ENCODE measurements at regions of chr18 and their contacts with region 1.

Region 1: GRCh38 chr18:48951448-48952286 is 902 bp upstream of the SMAD7 start:
- DNase-seq: peak; percentile 59 to 79 (median 67)
- ATAC-seq: peak; percentile 69
- H3K4me3 ChIP-seq: peak overlapping the region; percentile 69
- H3K4me3 Mint-ChIP-seq: peak overlapping the region; percentile 84 to 97 (median 94)
- H3K27ac ChIP-seq: peak overlapping the region; percentile 76
- H3K27ac Mint-ChIP-seq: peak overlapping the region; percentile 87 to 99 (median 96)
- H3K4me1 ChIP-seq: peaks cover 26 to 38% of the 10 kb centered on the region in 2 donors
- H3K4me1 Mint-ChIP-seq: peaks cover 24 to 55% (median 44%) of the 10 kb centered on the region in 7 donors
- H3K27me3 ChIP-seq: no peaks in the 10 kb centered on the region
- H3K27me3 Mint-ChIP-seq: peaks cover 0 to 11% (median 0%) of the 10 kb centered on the region in 5 donors

Region 2: GRCh38 chr18:48913201-48913600 is 38.5 kb before region 1 on chr18:
- CTCF ChIA-PET with region 1: interaction called, 3 read pairs
- POLR2A ChIA-PET with region 1: interaction called, 10 read pairs
- intact Hi-C with region 1: loop called in 1 of 2 experiments (anchors 2 kb)
- DNase-seq: peak in 4 of 9 donors; percentile 32 to 51 (median 44)
- ATAC-seq: peak; percentile 78
- H3K4me3 ChIP-seq: no peak overlapping the region
- H3K4me3 Mint-ChIP-seq: no peak overlapping the region
- H3K27ac ChIP-seq: no peak overlapping the region
- H3K27ac Mint-ChIP-seq: peak overlapping the region in 2 of 9 donors; percentile 28 to 55
- H3K4me1 ChIP-seq: peaks cover 11 to 19% of the 10 kb centered on the region in 2 donors
- H3K4me1 Mint-ChIP-seq: peaks cover 22 to 43% (median 33%) of the 10 kb centered on the region in 7 donors
- H3K27me3 ChIP-seq: no peaks in the 10 kb centered on the region
- H3K27me3 Mint-ChIP-seq: peaks cover 0 to 1% (median 0%) of the 10 kb centered on the region in 5 donors

Region 3: GRCh38 chr18:48940854-48941611 is 10.6 kb before region 1 on chr18:
- CTCF ChIA-PET with region 1: interaction called, 4 read pairs
- POLR2A ChIA-PET with region 1: interaction called, 41 read pairs
- intact Hi-C with region 1: loop called (anchors 1 kb)
- DNase-seq: peak; percentile 53 to 98 (median 96)
- ATAC-seq: peak; percentile 91
- H3K4me3 ChIP-seq: peak overlapping the region; percentile 36
- H3K4me3 Mint-ChIP-seq: peak overlapping the region; percentile 78 to 94 (median 86)
- H3K27ac ChIP-seq: peak overlapping the region; percentile 49
- H3K27ac Mint-ChIP-seq: peak overlapping the region; percentile 80 to 98 (median 93)
- H3K4me1 ChIP-seq: peaks cover 64 to 85% of the 10 kb centered on the region in 2 donors
- H3K4me1 Mint-ChIP-seq: peaks cover 59 to 100% (median 95%) of the 10 kb centered on the region in 7 donors
- H3K27me3 ChIP-seq: no peaks in the 10 kb centered on the region
- H3K27me3 Mint-ChIP-seq: no peaks in the 10 kb centered on the region

Region 4: GRCh38 chr18:48997985-48998831 is 46.5 kb after region 1 on chr18:
- CTCF ChIA-PET with region 1: no interaction called
- POLR2A ChIA-PET with region 1: interaction called, 3 read pairs
- intact Hi-C with region 1: loop called (anchors 1 to 2 kb)
- DNase-seq: no peak
- ATAC-seq: peak; percentile 25
- H3K4me3 ChIP-seq: no peak overlapping the region
- H3K4me3 Mint-ChIP-seq: peak overlapping the region in 2 of 10 donors; percentile 3 to 59
- H3K27ac ChIP-seq: no peak overlapping the region
- H3K27ac Mint-ChIP-seq: peak overlapping the region in 6 of 9 donors; percentile 58 to 95 (median 89)
- H3K4me1 ChIP-seq: peaks cover 7 to 17% of the 10 kb centered on the region in 2 donors
- H3K4me1 Mint-ChIP-seq: peaks cover 9 to 26% (median 17%) of the 10 kb centered on the region in 7 donors
- H3K27me3 ChIP-seq: no peaks in the 10 kb centered on the region
- H3K27me3 Mint-ChIP-seq: peaks cover 0 to 12% (median 0%) of the 10 kb centered on the region in 5 donors

Region 5: GRCh38 chr18:49412679-49413078 is 461.0 kb after region 1 on chr18:
- CTCF ChIA-PET with region 1: no interaction called
- POLR2A ChIA-PET with region 1: no interaction called
- intact Hi-C with region 1: loop called in 1 of 2 experiments (anchors 5 kb)
- DNase-seq: peak in 3 of 9 donors; percentile 15 to 31 (median 21)
- ATAC-seq: no peak
- H3K4me3 ChIP-seq: no peak overlapping the region
- H3K4me3 Mint-ChIP-seq: peak overlapping the region in 8 of 10 donors; percentile 1 to 61 (median 38)
- H3K27ac ChIP-seq: no peak overlapping the region
- H3K27ac Mint-ChIP-seq: peak overlapping the region; percentile 13 to 83 (median 77)
- H3K4me1 ChIP-seq: peaks cover 0 to 16% of the 10 kb centered on the region in 2 donors
- H3K4me1 Mint-ChIP-seq: peaks cover 13 to 51% (median 47%) of the 10 kb centered on the region in 7 donors
- H3K27me3 ChIP-seq: no peaks in the 10 kb centered on the region
- H3K27me3 Mint-ChIP-seq: no peaks in the 10 kb centered on the region

Region 6: GRCh38 chr18:50287441-50288347 is 1336.0 kb after region 1 on chr18 and contains the start of gene CXXC1:
- CTCF ChIA-PET with region 1: no interaction called
- POLR2A ChIA-PET with region 1: no interaction called
- intact Hi-C with region 1: loop called (anchors 1 to 10 kb)
- DNase-seq: peak; percentile 89 to 98 (median 97)
- ATAC-seq: peak; percentile 92
- H3K4me3 ChIP-seq: peak within 1 kb of the TSS; percentile 98
- H3K4me3 Mint-ChIP-seq: peak within 1 kb of the TSS; percentile 91 to 100 (median 98)
- H3K27ac ChIP-seq: peak within 1 kb of the TSS; percentile 97
- H3K27ac Mint-ChIP-seq: peak within 1 kb of the TSS; percentile 94 to 100 (median 99)
- H3K4me1 ChIP-seq: peaks cover 0 to 7% of the 10 kb centered on the region in 2 donors
- H3K4me1 Mint-ChIP-seq: peaks cover 6 to 39% (median 28%) of the 10 kb centered on the region in 7 donors
- H3K27me3 ChIP-seq: no peaks in the 10 kb centered on the region
- H3K27me3 Mint-ChIP-seq: peaks cover 0 to 2% (median 0%) of the 10 kb centered on the region in 5 donors
- total RNA-seq, gene CXXC1: 141 to 197 (median 155) TPM